ENCODE measurements at regions of chr12 and their contacts with region 1.

Region 1: GRCh38 chr12:9707864-9708808 is 24.8 kb downstream of the CLECL1 start:
- DNase-seq: peak; percentile 84
- ATAC-seq: peak; percentile 86
- H3K4me3 Mint-ChIP-seq: peak overlapping the region; percentile 37
- H3K27ac Mint-ChIP-seq: peak overlapping the region; percentile 89
- H3K4me1 Mint-ChIP-seq: peaks cover 50% of the 10 kb centered on the region
- H3K27me3 Mint-ChIP-seq: no peaks in the 10 kb centered on the region

Region 2: DNA sequence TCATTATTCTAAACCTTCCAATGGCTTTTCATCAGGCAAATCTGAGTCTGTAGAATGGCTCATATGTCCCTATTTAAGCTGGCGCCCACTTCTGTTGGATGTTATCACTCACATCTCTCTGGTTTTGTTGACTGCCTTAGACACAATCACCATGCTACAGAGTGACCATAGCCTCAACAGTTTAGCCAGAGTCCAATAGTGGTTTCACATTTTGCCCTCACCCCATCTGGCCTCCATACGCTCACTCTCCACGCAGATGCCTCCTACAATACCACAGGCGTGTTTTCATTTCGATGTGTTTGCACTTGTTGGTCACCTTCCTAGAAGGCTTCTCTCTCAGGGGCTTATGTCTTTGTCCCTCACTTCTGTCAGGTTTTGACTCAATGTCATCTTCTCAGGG is 103.8 kb before region 1 on chr12:
- CTCF ChIA-PET with region 1: no interaction called
- DNase-seq: no peak
- ATAC-seq: peak; percentile 42
- H3K4me3 Mint-ChIP-seq: peak overlapping the region; percentile 68
- H3K27ac Mint-ChIP-seq: peak overlapping the region; percentile 9
- H3K4me1 Mint-ChIP-seq: peaks cover 36% of the 10 kb centered on the region
- H3K27me3 Mint-ChIP-seq: no peaks in the 10 kb centered on the region

Region 3: GRCh38 chr12:9634177-9634803 is 73.8 kb before region 1 on chr12:
- CTCF ChIA-PET with region 1: interaction called, 93 read pairs
- DNase-seq: peak; percentile 85
- ATAC-seq: peak; percentile 75
- H3K4me3 Mint-ChIP-seq: no peak overlapping the region
- H3K27ac Mint-ChIP-seq: peak overlapping the region; percentile 39
- H3K4me1 Mint-ChIP-seq: peaks cover 33% of the 10 kb centered on the region
- H3K27me3 Mint-ChIP-seq: no peaks in the 10 kb centered on the region

Region 4: DNA sequence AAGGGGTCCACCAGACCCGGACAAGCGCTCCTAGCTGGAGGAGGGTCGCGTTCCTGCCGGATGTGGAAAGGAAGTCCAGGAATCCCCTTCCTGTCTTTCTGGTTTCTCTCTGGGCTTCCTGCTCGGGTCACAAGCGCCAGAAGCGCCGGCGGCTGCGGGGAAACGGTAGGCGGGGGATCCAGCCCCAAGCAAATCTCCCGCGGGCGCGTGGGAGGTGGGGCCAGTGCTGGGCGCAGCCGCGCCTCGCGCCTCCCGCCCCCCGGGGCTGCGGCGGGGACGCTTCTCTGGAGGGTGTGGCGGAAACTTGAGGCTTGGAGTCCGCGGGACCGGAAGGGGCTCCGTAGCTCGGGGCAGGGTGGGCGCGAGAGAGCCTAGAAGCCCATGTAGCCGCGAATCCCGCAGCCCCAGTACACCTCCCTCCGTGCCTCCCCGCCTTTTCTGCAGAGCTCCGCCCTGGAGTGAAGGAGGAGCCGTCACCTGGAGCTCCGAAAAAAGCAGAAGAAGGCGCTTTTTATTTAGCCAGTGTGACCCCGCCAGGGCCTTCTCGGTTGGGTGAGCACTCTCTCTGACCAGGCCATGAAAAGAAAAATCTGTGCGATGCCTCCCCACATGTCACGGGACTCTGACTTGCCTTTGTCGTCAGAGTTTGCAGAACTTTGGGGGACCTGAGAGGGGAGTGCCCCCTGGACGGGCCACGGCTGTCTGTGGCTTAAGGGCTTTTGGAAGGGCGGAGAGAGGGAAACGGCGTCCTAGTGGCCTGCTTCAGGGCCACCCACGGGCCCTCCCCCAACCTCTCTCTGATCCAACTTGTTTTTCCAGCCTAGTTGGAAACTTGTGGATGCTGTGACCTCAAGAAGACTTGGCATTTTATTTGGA is 60.1 kb before region 1 on chr12:
- CTCF ChIA-PET with region 1: interaction called, 10 read pairs
- DNase-seq: peak; percentile 97
- ATAC-seq: peak; percentile 77
- H3K4me3 Mint-ChIP-seq: peak overlapping the region; percentile 95
- H3K27ac Mint-ChIP-seq: peak overlapping the region; percentile 94
- H3K4me1 Mint-ChIP-seq: peaks cover 59% of the 10 kb centered on the region
- H3K27me3 Mint-ChIP-seq: peaks cover 2% of the 10 kb centered on the region

Region 5: DNA sequence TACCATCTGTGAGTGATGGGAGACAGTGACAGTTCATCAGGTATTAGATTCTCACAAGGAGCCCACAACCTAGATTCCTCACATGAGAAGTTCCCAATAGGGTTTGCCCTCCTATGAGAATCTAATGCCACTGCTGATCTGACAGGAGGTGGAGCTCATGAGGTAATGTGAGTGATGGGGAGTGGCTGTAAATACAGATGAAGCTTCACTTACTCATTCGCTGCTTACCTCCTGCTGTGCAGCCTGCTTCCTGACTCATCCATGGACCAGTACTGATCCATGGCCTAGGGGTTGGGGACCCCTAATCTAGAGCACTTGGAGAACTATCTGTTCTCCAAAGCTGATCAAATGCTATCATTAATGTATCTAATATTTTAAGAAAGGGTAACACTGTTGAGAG is 20.9 kb before region 1 on chr12:
- CTCF ChIA-PET with region 1: interaction called, 15 read pairs
- DNase-seq: no peak
- ATAC-seq: no peak
- H3K4me3 Mint-ChIP-seq: no peak overlapping the region
- H3K27ac Mint-ChIP-seq: peak overlapping the region; percentile 43
- H3K4me1 Mint-ChIP-seq: peaks cover 67% of the 10 kb centered on the region
- H3K27me3 Mint-ChIP-seq: no peaks in the 10 kb centered on the region

Region 6: DNA sequence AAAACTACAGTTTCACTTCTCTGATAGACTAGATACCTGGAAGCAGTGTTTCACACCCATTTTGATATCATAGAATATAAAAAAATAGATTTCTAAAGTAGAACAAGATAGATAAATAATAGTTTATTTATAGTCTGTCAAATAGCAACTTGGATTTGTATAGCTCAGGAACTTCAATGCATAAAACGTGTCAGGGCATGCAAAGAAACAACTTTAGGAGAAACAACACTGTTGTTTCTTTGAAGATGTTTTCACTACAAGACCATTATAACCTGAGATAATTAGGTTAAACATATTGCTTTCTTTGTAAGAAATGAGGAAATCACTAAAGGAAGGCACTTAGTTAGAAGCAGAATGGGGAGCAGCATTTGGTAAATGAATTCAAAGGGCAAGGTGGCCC is 17.3 kb after region 1 on chr12:
- CTCF ChIA-PET with region 1: interaction called, 24 read pairs
- DNase-seq: no peak
- ATAC-seq: no peak
- H3K4me3 Mint-ChIP-seq: no peak overlapping the region
- H3K27ac Mint-ChIP-seq: no peak overlapping the region
- H3K4me1 Mint-ChIP-seq: peaks cover 12% of the 10 kb centered on the region
- H3K27me3 Mint-ChIP-seq: no peaks in the 10 kb centered on the region

Region 7: GRCh38 chr12:9731797-9732196 is 23.7 kb after region 1 on chr12:
- CTCF ChIA-PET with region 1: interaction called, 24 read pairs
- DNase-seq: no peak
- ATAC-seq: peak; percentile 56
- H3K4me3 Mint-ChIP-seq: peak overlapping the region; percentile 66
- H3K27ac Mint-ChIP-seq: peak overlapping the region; percentile 22
- H3K4me1 Mint-ChIP-seq: peaks cover 39% of the 10 kb centered on the region
- H3K27me3 Mint-ChIP-seq: no peaks in the 10 kb centered on the region

Region 8: DNA sequence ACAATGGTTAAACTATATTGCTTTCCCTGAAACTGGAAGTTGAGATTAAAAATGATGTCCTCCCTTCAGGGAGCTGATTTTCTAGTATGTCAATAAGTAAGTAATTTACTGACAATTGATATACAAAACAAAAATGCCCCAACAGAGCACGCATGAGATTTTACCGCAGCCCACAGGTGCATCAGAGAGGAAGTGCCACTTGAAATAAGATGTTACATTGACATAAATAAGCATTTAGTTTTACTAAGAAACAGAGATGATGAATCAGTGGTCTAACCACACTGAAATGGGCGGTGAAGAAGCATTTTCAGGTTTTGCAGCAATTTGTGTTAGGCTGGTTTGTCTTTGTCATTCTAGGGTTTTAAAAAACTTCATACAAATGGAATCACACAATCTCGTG is 33.6 kb after region 1 on chr12:
- CTCF ChIA-PET with region 1: interaction called, 27 read pairs
- DNase-seq: peak; percentile 95
- ATAC-seq: peak; percentile 75
- H3K4me3 Mint-ChIP-seq: peak overlapping the region; percentile 77
- H3K27ac Mint-ChIP-seq: peak overlapping the region; percentile 99
- H3K4me1 Mint-ChIP-seq: peaks cover 72% of the 10 kb centered on the region
- H3K27me3 Mint-ChIP-seq: no peaks in the 10 kb centered on the region

Region 9: DNA sequence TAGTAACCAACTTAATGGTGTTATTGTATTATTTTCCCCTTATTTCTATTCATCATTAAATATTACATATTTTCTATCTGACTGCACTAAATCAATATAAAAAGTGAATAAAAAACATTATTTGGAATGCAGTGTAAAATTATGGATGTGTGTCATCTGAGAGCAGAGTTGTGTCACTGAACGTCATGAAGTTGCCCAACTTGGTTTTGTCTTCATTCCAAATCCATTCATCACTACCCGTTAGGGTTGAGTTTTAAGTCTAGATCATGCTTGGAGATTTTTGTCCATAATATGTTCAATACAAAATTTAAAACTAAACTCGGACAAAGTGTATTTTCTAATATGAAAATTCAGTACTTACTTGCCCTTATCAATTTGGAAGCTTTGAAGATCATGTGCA is 135.3 kb after region 1 on chr12:
- CTCF ChIA-PET with region 1: no interaction called
- DNase-seq: no peak
- ATAC-seq: no peak
- H3K4me3 Mint-ChIP-seq: no peak overlapping the region
- H3K27ac Mint-ChIP-seq: no peak overlapping the region
- H3K4me1 Mint-ChIP-seq: no peaks in the 10 kb centered on the region
- H3K27me3 Mint-ChIP-seq: peaks cover 21% of the 10 kb centered on the region